Heart right ventricle (tissue), 16 donors: ENCODE measurements at regions of chr10 and their contacts with region 1.

Region 1: DNA sequence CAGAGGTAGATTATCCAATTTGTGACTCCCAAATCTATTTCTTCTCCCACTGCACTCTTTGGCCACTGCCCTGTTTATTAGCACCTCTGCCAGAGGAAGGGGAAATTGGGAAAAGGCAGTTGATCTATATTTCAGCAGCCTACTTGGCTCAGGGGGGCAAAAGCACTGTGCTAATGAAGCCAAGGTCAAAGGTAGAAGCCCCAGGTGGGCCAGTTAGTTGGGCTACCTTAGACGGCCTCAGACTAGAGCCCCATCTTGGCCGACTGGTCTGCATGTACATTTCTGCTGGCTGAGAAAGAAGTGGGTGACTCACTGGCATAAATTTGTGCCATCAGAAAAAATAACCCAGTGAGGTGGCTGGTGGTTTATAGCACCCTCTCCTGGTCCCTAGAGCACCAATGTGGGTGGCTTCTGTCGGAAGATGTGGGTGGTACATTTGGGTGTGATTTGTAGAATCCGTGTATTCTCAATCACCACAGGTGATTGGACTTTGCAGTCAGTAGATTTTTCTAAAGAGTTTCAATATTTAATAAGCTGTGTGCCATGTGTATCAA is 293.3 kb upstream of the MKI67 start:
- DNase-seq: no peak
- ATAC-seq: peak in 1 of 8 donors; percentile 55
- H3K4me3 ChIP-seq: no peak overlapping the region
- H3K27ac ChIP-seq: no peak overlapping the region
- H3K4me1 ChIP-seq: no peaks in the 10 kb centered on the region
- H3K27me3 ChIP-seq: peaks cover 0 to 31% (median 12%) of the 10 kb centered on the region in 7 donors
- CTCF ChIP-seq: peak in 2 of 9 donors; percentile 13 to 17

Region 2: DNA sequence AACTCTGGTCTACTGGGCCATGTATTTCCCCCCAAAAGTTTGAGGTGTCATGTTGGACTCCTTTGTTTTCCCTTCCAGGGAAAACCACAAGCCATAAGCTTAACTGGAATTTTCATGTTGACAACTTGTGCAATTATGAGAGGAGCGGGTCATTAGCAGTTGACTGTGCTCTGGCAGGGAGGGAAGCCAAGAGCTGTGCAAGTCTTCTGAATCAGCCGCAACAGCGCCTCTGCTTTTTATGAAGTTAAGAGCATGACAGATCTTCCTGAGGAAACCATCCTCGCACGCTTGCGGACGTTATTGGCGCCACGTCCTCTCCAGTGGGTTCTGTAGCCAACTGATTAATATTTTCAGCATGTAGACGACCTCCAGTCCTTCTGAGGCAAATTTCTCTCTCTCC is 144.6 kb before region 1 on chr10:
- intact Hi-C with region 1: loop called in 1 of 10 experiments (anchors 10 kb)
- DNase-seq: peak in 1 of 2 donors; percentile 13
- ATAC-seq: peak in 1 of 8 donors; percentile 72
- H3K4me3 ChIP-seq: no peak overlapping the region
- H3K27ac ChIP-seq: no peak overlapping the region
- H3K4me1 ChIP-seq: peaks cover 0 to 9% (median 0%) of the 10 kb centered on the region in 9 donors
- H3K27me3 ChIP-seq: peaks cover 0 to 81% (median 74%) of the 10 kb centered on the region in 7 donors
- CTCF ChIP-seq: peak in 2 of 9 donors; percentile 14 to 16

Region 3: GRCh38 chr10:128324077-128324827 is 95.3 kb before region 1 on chr10:
- intact Hi-C with region 1: loop called in 1 of 10 experiments (anchors 5 kb)
- DNase-seq: peak; percentile 28 to 59
- ATAC-seq: peak; percentile 37 to 94 (median 74)
- H3K4me3 ChIP-seq: no peak overlapping the region
- H3K27ac ChIP-seq: no peak overlapping the region
- H3K4me1 ChIP-seq: peaks cover 0 to 4% (median 0%) of the 10 kb centered on the region in 9 donors
- H3K27me3 ChIP-seq: peaks cover 0 to 46% (median 12%) of the 10 kb centered on the region in 7 donors
- CTCF ChIP-seq: peak in 6 of 9 donors; percentile 27 to 51 (median 33)

Region 4: GRCh38 chr10:128398118-128398517 is 21.4 kb before region 1 on chr10:
- intact Hi-C with region 1: loop called in 1 of 10 experiments (anchors 2 kb)
- DNase-seq: no peak
- ATAC-seq: no peak
- H3K4me3 ChIP-seq: no peak overlapping the region
- H3K27ac ChIP-seq: no peak overlapping the region
- H3K4me1 ChIP-seq: no peaks in the 10 kb centered on the region
- H3K27me3 ChIP-seq: peaks cover 0 to 7% (median 0%) of the 10 kb centered on the region in 7 donors
- CTCF ChIP-seq: no peak